Activated CD4-positive, alpha-beta T cell treated with anti-CD3 and anti-CD28 coated beads, Interleukin-2, amount 10 ng/mL, durations not matched to agents 24 days and 14 days (primary cell): ENCODE measurements at regions of chr10 and their contacts with region 1.

Region 1: GRCh38 chr10:22630234-22631174 is 83.9 kb downstream of the PIP4K2A start:
- DNase-seq: peak; percentile 84
- H3K4me3 Mint-ChIP-seq: peak overlapping the region; percentile 76
- H3K27ac Mint-ChIP-seq: peak overlapping the region; percentile 95
- H3K4me1 Mint-ChIP-seq: peaks cover 79% of the 10 kb centered on the region
- H3K27me3 Mint-ChIP-seq: no peaks in the 10 kb centered on the region

Region 2: GRCh38 chr10:22597138-22597537 is 33.4 kb before region 1 on chr10:
- intact Hi-C with region 1: loop called (anchors 1 kb)
- DNase-seq: no peak
- H3K4me3 Mint-ChIP-seq: no peak overlapping the region
- H3K27ac Mint-ChIP-seq: peak overlapping the region; percentile 34
- H3K4me1 Mint-ChIP-seq: peaks cover 46% of the 10 kb centered on the region
- H3K27me3 Mint-ChIP-seq: no peaks in the 10 kb centered on the region

Region 3: DNA sequence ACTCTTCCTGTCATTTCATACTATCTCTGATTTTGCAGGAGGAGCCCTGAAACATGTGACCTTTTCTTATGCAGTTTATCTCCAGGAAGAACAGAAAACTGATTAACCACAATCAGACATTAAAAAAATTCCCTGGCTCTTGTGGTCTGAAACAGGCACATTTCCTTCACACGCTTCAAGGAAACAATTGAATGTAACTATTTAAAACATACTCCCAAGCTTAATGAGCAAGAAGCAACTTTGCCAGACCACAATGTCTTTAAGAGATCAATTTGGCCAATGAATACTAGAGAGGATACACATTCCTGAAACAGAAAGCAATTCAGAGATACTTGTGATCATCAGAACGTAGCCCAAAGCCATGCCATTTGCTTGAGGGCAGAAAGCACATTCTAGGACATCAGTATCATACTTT is 18.1 kb after region 1 on chr10:
- intact Hi-C with region 1: loop called (anchors 1 kb)
- DNase-seq: peak; percentile 63
- H3K4me3 Mint-ChIP-seq: peak overlapping the region; percentile 90
- H3K27ac Mint-ChIP-seq: peak overlapping the region; percentile 100
- H3K4me1 Mint-ChIP-seq: peaks cover 87% of the 10 kb centered on the region
- H3K27me3 Mint-ChIP-seq: no peaks in the 10 kb centered on the region

Region 4: GRCh38 chr10:22666287-22667092 is 36.0 kb after region 1 on chr10:
- intact Hi-C with region 1: loop called (anchors 1 kb)
- DNase-seq: peak; percentile 90
- H3K4me3 Mint-ChIP-seq: peak overlapping the region; percentile 90
- H3K27ac Mint-ChIP-seq: peak overlapping the region; percentile 94
- H3K4me1 Mint-ChIP-seq: peaks cover 52% of the 10 kb centered on the region
- H3K27me3 Mint-ChIP-seq: no peaks in the 10 kb centered on the region

Region 5: DNA sequence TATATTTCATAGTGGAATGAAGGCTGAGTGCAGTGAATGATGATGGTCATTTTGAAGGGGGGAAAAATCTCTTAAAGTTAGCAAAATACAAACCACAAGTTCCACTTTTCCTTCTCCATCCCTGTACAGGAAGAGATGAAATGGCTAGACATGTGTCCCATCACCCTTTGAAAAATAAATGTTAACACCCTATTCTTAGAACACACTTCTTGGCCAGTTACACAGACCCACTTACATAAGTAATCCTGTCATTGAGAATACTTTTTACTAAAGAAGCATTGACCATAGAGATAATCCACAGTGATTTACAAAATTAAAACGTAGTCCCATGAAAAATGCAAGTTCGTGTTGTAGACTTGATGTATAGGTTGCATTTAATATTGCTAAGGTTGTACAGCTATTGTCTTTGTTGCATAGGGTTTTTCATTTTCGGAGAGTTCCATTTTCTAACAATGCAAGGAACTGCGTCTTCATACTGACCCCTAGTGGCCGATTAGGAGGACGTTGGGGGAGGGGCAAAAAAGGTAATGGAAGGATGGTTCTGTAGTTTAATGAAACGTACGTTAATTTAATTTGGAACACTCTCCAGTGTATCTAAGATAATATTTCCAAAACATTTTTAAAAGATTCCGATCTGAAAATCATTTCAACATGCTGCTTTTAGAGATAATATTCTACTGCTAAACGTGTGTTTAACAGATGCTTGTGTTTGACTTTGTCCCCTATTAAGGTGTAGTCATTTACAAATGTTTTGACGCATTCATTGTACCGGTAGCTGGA is 358.3 kb after region 1 on chr10:
- intact Hi-C with region 1: no loop called
- DNase-seq: peak; percentile 92
- H3K4me3 Mint-ChIP-seq: no peak overlapping the region
- H3K27ac Mint-ChIP-seq: no peak overlapping the region
- H3K4me1 Mint-ChIP-seq: peaks cover 8% of the 10 kb centered on the region
- H3K27me3 Mint-ChIP-seq: peaks cover 20% of the 10 kb centered on the region